ENCODE measurements at regions of chr7 and their contacts with region 1.

Region 1: GRCh38 chr7:100611974-100612729 is at the start of gene MOSPD3:
- DNase-seq: peak; percentile 96 to 100 (median 98)
- ATAC-seq: peak; percentile 89
- H3K4me3 ChIP-seq: peak within 1 kb of the TSS; percentile 68 to 96
- H3K4me3 Mint-ChIP-seq: peak within 1 kb of the TSS; percentile 99
- H3K27ac ChIP-seq: peak within 1 kb of the TSS; percentile 93 to 98
- H3K27ac Mint-ChIP-seq: peak within 1 kb of the TSS; percentile 100
- H3K4me1 ChIP-seq: peaks cover 19% of the 10 kb centered on the region
- H3K4me1 Mint-ChIP-seq: peaks cover 24% of the 10 kb centered on the region
- H3K27me3 ChIP-seq: no peaks in the 10 kb centered on the region
- H3K27me3 Mint-ChIP-seq: no peaks in the 10 kb centered on the region
- CTCF ChIP-seq: no peak
- total RNA-seq, gene MOSPD3: 10.3 to 10.5 TPM

Region 2: GRCh38 chr7:100435401-100436304 is 176.5 kb before region 1 on chr7:
- CTCF ChIA-PET with region 1: no interaction called
- POLR2A ChIA-PET with region 1: interaction called, 9 read pairs
- intact Hi-C with region 1: loop called in 1 of 2 experiments (anchors 1 kb)
- DNase-seq: peak in 8 of 9 experiments; percentile 35 to 76 (median 52)
- ATAC-seq: peak; percentile 32
- H3K4me3 ChIP-seq: peak overlapping the region; percentile 75 to 90
- H3K4me3 Mint-ChIP-seq: peak overlapping the region; percentile 94
- H3K27ac ChIP-seq: peak overlapping the region; percentile 90 to 96
- H3K27ac Mint-ChIP-seq: peak overlapping the region; percentile 97
- H3K4me1 ChIP-seq: peaks cover 38% of the 10 kb centered on the region
- H3K4me1 Mint-ChIP-seq: peaks cover 51% of the 10 kb centered on the region
- H3K27me3 ChIP-seq: no peaks in the 10 kb centered on the region
- H3K27me3 Mint-ChIP-seq: no peaks in the 10 kb centered on the region
- CTCF ChIP-seq: no peak

Region 3: GRCh38 chr7:100626530-100627237 is 14.5 kb after region 1 on chr7:
- CTCF ChIA-PET with region 1: interaction called, 6 read pairs
- POLR2A ChIA-PET with region 1: interaction called, 14 read pairs
- intact Hi-C with region 1: loop called (anchors 1 kb)
- DNase-seq: peak; percentile 82 to 94 (median 88)
- ATAC-seq: peak; percentile 99
- H3K4me3 ChIP-seq: peak overlapping the region; percentile 40 to 45
- H3K4me3 Mint-ChIP-seq: peak overlapping the region; percentile 70
- H3K27ac ChIP-seq: peak overlapping the region; percentile 56 to 78
- H3K27ac Mint-ChIP-seq: peak overlapping the region; percentile 80
- H3K4me1 ChIP-seq: peaks cover 14% of the 10 kb centered on the region
- H3K4me1 Mint-ChIP-seq: peaks cover 35% of the 10 kb centered on the region
- H3K27me3 ChIP-seq: no peaks in the 10 kb centered on the region
- H3K27me3 Mint-ChIP-seq: no peaks in the 10 kb centered on the region
- CTCF ChIP-seq: no peak

Region 4: DNA sequence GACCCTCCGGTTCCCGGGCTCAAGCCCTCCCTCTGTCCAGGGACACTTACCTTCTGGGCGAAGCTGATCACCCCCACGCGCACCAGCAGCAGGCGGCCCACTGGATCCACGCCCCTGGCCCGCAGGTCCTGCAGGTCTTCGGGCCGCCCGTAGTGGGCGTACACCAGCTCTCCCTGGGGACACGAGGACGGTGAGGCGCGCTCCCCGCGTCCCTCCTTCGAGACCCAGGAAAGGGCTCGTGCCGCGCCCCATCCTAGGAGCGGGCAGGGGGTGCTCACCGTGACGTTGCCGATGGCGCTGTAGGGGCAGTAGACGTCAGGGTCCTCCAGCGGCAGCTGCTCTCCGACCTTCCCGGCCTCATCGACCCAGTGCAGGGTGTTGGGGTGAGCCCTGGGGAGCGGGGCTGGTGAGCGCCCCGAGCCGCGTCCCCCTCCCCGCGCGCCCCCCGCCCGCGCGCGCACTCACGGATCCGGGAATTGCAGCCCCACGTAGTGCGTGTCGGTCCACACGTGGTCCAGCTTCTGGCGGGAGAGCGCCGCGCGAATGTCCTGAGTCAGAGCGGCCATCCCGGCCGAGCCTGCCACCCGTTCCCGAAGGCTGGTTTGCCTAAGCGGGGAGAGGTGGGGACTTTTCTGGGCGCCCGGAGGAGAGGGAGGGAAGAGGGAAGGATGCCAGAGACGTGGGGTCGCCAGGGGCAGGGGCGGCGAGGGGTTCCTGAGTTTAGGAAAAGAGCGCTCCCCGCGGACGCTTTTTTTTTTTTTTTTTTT is 21.0 kb after region 1 on chr7:
- CTCF ChIA-PET with region 1: interaction called, 9 read pairs
- POLR2A ChIA-PET with region 1: interaction called, 12 read pairs
- intact Hi-C with region 1: no loop called
- DNase-seq: peak in 7 of 9 experiments; percentile 34 to 81 (median 60)
- ATAC-seq: peak; percentile 77
- H3K4me3 ChIP-seq: peak overlapping the region; percentile 69 to 82
- H3K4me3 Mint-ChIP-seq: peak overlapping the region; percentile 77
- H3K27ac ChIP-seq: peak overlapping the region in 1 of 2 experiments; percentile 50
- H3K27ac Mint-ChIP-seq: no peak overlapping the region
- H3K4me1 ChIP-seq: peaks cover 8% of the 10 kb centered on the region
- H3K4me1 Mint-ChIP-seq: peaks cover 21% of the 10 kb centered on the region
- H3K27me3 ChIP-seq: no peaks in the 10 kb centered on the region
- H3K27me3 Mint-ChIP-seq: no peaks in the 10 kb centered on the region
- CTCF ChIP-seq: peak; percentile 36